Right cardiac atrium (tissue), 5 donors: ENCODE measurements at regions of chr11 and their contacts with region 1.

Region 1: DNA sequence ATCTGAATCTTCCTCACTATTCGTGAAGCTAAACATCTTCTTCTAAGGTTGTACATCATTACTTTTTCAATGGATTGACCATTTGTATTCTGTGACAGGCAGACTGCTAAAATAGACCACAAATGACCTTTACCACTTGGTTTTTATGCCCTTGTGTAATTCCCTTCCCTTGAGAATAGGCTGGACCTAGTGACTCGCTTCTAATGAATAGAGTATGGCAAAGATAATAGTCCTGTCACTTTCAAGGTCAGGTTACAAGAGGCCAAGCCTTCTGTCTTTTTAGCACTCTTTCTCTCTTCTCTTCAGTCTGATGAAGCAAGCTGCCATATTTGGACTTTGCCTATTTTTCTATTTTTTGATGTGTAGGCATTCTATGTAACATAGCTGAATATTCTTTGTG is 492.9 kb downstream of the SOX6 start:
- DNase-seq: no peak
- ATAC-seq: peak in 1 of 2 donors; percentile 14
- H3K4me3 ChIP-seq: no peak overlapping the region
- H3K27ac ChIP-seq: no peak overlapping the region
- H3K4me1 ChIP-seq: no peaks in the 10 kb centered on the region
- H3K27me3 ChIP-seq: no peaks in the 10 kb centered on the region

Region 2: GRCh38 chr11:15750535-15751308 is 112.7 kb before region 1 on chr11:
- intact Hi-C with region 1: loop called in 1 of 4 experiments (anchors 5 kb)
- DNase-seq: no peak
- ATAC-seq: no peak
- H3K4me3 ChIP-seq: no peak overlapping the region
- H3K27ac ChIP-seq: no peak overlapping the region
- H3K4me1 ChIP-seq: no peaks in the 10 kb centered on the region
- H3K27me3 ChIP-seq: no peaks in the 10 kb centered on the region